Mammary epithelial cell (primary cell): ENCODE measurements at regions of chr13 and their contacts with region 1.

Region 1: DNA sequence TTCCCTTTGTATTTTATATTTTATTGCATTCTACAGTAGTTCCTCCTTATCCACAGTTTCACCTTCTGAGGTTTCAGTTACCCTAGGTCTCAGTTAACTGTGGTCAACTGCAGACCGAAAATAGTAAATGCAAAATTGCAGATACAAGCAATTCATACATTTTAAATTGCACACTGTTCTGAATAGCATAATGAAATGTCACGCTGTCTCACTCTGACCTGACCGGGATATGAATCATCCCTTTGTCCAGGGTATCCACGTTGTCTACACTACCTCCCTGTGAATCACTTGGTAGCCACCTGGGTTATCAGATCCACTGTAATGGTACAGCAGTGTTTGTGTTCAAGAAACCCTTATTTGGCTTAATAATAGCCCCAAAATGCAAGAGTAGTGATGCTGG is 325.0 kb downstream of the DNAJC15 start:
- DNase-seq: peak; percentile 74
- H3K4me3 ChIP-seq: no peak overlapping the region
- H3K27ac ChIP-seq: no peak overlapping the region
- H3K4me1 ChIP-seq: peaks cover 15% of the 10 kb centered on the region
- H3K27me3 ChIP-seq: no peaks in the 10 kb centered on the region
- CTCF ChIP-seq: no peak

Region 2: DNA sequence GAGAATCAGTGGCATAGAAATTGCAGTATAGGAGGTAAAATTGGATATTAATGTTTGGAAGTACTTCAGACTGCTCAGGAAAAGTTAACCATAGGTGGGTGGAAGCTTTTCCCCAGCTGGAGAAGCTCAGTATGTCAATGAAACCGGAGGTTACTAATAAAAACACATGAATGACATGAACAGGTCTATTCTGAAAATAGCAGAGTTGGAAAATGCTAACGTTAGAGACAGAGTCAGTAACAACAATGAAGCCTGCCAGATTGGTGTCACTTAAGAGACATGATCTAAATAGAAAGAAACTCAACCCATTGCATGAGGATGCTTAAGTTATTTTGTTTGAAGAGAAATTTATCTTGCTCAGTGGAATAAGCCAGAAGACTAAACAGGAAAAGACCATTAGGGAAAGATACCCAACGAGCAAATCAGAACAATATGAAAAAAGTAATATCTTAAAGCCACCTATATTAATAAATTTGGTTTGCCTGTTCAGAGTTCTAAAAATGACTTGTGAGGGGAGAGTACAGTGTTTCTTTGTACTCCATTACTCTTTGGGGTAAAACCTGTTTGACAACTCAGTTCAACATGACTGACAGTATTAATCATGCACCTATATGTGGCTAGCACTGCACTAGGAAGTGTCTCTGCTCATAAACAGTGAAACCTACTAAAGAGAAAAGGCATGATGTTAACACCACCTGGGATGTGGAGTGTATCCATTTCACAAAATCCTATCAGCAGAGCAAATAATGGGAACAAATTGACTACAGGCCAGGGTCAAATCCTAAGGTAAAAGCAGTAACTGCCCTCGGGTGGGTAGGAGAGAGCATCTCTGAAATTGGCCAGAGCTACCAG is 39.7 kb after region 1 on chr13:
- CTCF ChIA-PET with region 1: no interaction called
- dilution Hi-C with region 1: no loop called
- in situ Hi-C with region 1: no loop called
- intact Hi-C with region 1: loop called (anchors 1 kb)
- DNase-seq: peak; percentile 86
- H3K4me3 ChIP-seq: no peak overlapping the region
- H3K27ac ChIP-seq: peak overlapping the region; percentile 38
- H3K4me1 ChIP-seq: peaks cover 16% of the 10 kb centered on the region
- H3K27me3 ChIP-seq: no peaks in the 10 kb centered on the region
- CTCF ChIP-seq: no peak